Dendritic cell treated with granulocyte-macrophage colony-stimulating factor and Interleukin-4, amounts not matched to agents 40 ng/mL and 50 ng/mL, for 4 days (primary cell): ENCODE measurements at regions of chr5 and their contacts with region 1.

Region 1: GRCh38 chr5:39570403-39571027 is 145.7 kb upstream of the DAB2 start:
- H3K4me3 Mint-ChIP-seq: no peak overlapping the region
- H3K27ac Mint-ChIP-seq: no peak overlapping the region
- H3K4me1 Mint-ChIP-seq: peaks cover 5% of the 10 kb centered on the region
- H3K27me3 Mint-ChIP-seq: no peaks in the 10 kb centered on the region

Region 2: GRCh38 chr5:39148983-39149534 is 421.5 kb before region 1 on chr5:
- intact Hi-C with region 1: loop called (anchors 10 kb)
- H3K4me3 Mint-ChIP-seq: no peak overlapping the region
- H3K27ac Mint-ChIP-seq: peak overlapping the region; percentile 7
- H3K4me1 Mint-ChIP-seq: peaks cover 60% of the 10 kb centered on the region
- H3K27me3 Mint-ChIP-seq: no peaks in the 10 kb centered on the region

Region 3: GRCh38 chr5:39217365-39218281 is 352.9 kb before region 1 on chr5:
- intact Hi-C with region 1: loop called (anchors 5 kb)
- H3K4me3 Mint-ChIP-seq: peak overlapping the region; percentile 50
- H3K27ac Mint-ChIP-seq: peak overlapping the region; percentile 91
- H3K4me1 Mint-ChIP-seq: peaks cover 79% of the 10 kb centered on the region
- H3K27me3 Mint-ChIP-seq: no peaks in the 10 kb centered on the region

Region 4: DNA sequence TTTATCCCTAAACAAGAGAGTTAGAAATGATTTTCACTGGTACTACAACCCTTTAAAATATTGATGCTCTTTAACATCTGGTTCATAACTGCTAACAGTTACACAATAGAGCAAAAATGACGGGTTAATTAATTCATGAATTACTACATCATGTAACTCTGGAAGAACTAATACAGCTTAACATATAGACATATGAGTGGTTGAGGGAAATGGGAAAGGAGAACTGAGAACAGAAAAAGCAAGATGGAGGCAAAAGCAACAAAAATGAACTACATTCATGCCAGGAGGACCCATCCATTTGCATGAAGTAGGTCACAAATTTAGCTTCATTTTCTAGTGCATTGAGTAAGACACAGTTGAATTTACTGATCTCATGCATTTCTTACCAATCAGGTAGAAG is 268.0 kb before region 1 on chr5:
- intact Hi-C with region 1: loop called (anchors 10 kb)
- H3K4me3 Mint-ChIP-seq: no peak overlapping the region
- H3K27ac Mint-ChIP-seq: no peak overlapping the region
- H3K4me1 Mint-ChIP-seq: peaks cover 5% of the 10 kb centered on the region
- H3K27me3 Mint-ChIP-seq: no peaks in the 10 kb centered on the region

Region 5: DNA sequence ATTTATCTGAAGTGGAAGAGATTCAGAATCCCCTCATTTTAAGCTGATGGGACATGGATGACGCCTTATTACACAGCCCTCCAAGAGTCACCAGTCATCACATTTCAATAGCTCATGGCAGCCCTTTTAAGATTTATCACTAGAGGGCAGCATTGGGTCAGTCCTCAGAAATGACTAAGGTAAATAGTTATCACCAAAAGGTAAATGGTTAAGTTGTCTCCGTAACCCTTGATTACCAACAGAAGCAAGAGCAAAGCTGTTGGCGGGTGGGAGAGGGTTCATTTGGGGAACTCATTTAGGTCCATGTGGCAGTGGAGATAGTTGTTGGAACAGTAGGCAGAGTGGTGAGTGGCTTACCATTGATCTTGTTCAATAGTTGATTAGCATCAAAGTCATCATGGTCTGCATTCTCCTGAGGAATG is 194.2 kb before region 1 on chr5:
- intact Hi-C with region 1: loop called (anchors 1 kb)
- H3K4me3 Mint-ChIP-seq: no peak overlapping the region
- H3K27ac Mint-ChIP-seq: no peak overlapping the region
- H3K4me1 Mint-ChIP-seq: no peaks in the 10 kb centered on the region
- H3K27me3 Mint-ChIP-seq: no peaks in the 10 kb centered on the region

Region 6: DNA sequence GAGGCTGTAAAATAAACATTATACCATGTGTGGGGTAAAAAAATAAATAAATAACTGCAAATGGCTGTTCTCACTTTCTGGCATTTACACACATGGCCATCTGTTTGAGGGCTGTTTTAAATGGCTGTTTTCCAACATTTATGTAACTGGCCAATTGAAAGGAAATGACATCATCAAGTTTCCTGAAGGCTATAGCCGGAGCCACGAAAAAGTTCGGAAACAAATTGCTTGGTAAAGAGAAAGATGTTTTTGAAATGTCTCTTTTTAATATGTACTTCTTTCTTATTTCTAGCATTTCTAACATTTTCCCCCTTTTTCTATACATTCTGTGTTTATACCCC is 50.3 kb before region 1 on chr5:
- intact Hi-C with region 1: no loop called
- H3K4me3 Mint-ChIP-seq: no peak overlapping the region
- H3K27ac Mint-ChIP-seq: no peak overlapping the region
- H3K4me1 Mint-ChIP-seq: peaks cover 12% of the 10 kb centered on the region
- H3K27me3 Mint-ChIP-seq: no peaks in the 10 kb centered on the region

Region 7: DNA sequence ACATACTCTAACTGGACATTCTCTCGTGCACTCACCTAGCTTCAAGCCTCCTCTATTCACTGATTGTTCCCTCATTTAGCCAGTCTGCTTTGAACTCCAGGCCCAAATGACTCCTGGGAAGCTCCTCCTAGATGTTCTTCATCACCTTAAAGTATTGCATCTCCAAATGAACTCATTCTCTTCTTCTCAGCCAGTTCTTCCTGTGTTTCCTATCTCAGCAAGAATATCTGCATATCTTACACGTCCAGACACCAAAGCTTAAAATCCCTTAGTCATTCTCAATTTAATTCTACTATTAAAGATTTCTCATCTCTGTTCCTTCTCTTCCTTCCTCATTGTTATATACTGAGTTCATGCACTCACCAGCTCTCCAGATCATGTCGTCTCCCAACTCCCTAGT is 27.2 kb before region 1 on chr5:
- intact Hi-C with region 1: no loop called
- H3K4me3 Mint-ChIP-seq: no peak overlapping the region
- H3K27ac Mint-ChIP-seq: no peak overlapping the region
- H3K4me1 Mint-ChIP-seq: peaks cover 9% of the 10 kb centered on the region
- H3K27me3 Mint-ChIP-seq: peaks cover 1% of the 10 kb centered on the region